IMR-90 (cell line): ENCODE measurements at regions of chr22 and their contacts with region 1.

Region 1: DNA sequence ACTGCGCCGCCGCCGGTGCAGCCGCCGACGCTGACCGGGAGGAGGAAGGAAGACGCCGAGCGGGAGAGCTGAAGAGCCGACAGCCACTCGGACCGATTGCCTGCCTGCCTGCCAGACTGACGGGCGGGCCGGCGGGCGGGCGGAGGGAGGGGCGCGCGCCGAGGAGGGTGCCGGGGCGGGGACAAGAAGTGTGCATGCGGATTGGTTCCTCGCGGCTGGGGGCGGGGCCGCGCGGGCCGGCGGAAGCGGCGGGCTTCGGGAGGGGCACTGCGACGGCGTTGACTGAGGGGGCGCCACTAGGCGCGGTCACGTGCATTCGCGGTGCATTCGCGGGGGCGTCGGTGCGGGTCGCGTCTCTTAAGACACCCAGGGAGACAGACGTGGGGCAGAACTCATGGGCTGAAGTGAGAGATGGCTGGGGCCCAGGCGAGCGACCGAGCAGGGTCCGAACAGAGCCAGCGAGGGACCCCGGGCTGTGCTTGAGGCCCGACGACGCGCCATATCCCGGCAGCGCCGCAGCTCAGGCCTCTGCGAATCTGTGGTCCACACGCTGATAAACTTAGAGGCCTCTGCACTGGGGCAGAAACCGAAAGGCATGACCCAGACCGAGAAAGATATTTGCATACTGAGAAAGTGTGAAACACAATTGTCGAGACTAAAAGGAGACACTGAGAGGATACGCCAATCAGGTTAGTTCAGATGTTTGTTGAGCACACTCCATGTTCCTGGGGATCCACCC is at the start of gene MAPK1:
- DNase-seq: peak; percentile 81
- ATAC-seq: peak; percentile 99
- H3K4me3 ChIP-seq: peak within 1 kb of the TSS; percentile 96
- H3K27ac ChIP-seq: peak within 1 kb of the TSS; percentile 88
- H3K4me1 ChIP-seq: no peaks in the 10 kb centered on the region; the same call in 1 of the 2 replicates
- H3K27me3 ChIP-seq: no peaks in the 10 kb centered on the region
- CTCF ChIP-seq: peak; percentile 31; the same call in 1 of the 2 replicates
- POLR2A ChIP-seq: peak; percentile 86
- RAD21 ChIP-seq: no peak
- total RNA-seq, gene MAPK1: 44.7 and 51.3 TPM in 2 replicates

Region 2: DNA sequence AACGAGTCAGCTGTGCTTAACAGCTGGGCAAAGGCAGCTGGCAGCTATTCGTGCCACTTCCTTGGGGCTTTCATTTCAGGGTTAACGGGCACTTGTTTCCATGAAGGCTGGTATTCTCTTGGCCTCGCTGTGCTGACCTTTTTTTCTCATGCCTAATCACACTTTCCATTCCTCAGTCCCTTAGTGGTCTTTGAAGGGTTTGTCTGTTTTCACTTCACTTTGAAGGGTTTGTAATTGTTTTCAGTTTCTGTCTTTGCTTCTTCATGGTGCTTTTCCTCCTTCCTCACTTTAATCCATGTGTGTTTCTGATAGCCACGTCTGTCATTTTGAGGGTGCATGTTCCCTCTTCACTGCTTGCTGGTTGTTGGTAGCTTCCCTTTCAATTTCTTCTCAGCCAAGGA is 177.3 kb before region 1 on chr22:
- CTCF ChIA-PET with region 1: no interaction called
- POLR2A ChIA-PET with region 1: no interaction called
- dilution Hi-C with region 1: no loop called
- in situ Hi-C with region 1: no loop called
- intact Hi-C with region 1: no loop called
- DNase-seq: no peak
- ATAC-seq: no peak
- H3K4me3 ChIP-seq: no peak overlapping the region
- H3K27ac ChIP-seq: no peak overlapping the region
- H3K4me1 ChIP-seq: no peaks in the 10 kb centered on the region
- H3K27me3 ChIP-seq: no peaks in the 10 kb centered on the region
- CTCF ChIP-seq: no peak
- POLR2A ChIP-seq: no peak
- RAD21 ChIP-seq: no peak

Region 3: GRCh38 chr22:21712894-21713712 is 154.6 kb before region 1 on chr22:
- CTCF ChIA-PET with region 1: no interaction called
- POLR2A ChIA-PET with region 1: no interaction called
- dilution Hi-C with region 1: no loop called
- in situ Hi-C with region 1: no loop called
- intact Hi-C with region 1: loop called (anchors 5 kb)
- DNase-seq: peak; percentile 78
- ATAC-seq: peak; percentile 98
- H3K4me3 ChIP-seq: no peak overlapping the region
- H3K27ac ChIP-seq: no peak overlapping the region
- H3K4me1 ChIP-seq: peaks cover 3% of the 10 kb centered on the region
- H3K27me3 ChIP-seq: no peaks in the 10 kb centered on the region
- CTCF ChIP-seq: peak; percentile 86
- POLR2A ChIP-seq: 0 out of 2 replicates have a peak, but pooled peaks have one; percentile 42
- RAD21 ChIP-seq: peak; percentile 91

Region 4: GRCh38 chr22:21760640-21761039 is 107.1 kb before region 1 on chr22:
- CTCF ChIA-PET with region 1: interaction called, 3 read pairs
- POLR2A ChIA-PET with region 1: no interaction called
- dilution Hi-C with region 1: no loop called
- in situ Hi-C with region 1: no loop called
- intact Hi-C with region 1: loop called (anchors 5 kb)
- DNase-seq: peak; percentile 98
- ATAC-seq: peak; percentile 53
- H3K4me3 ChIP-seq: no peak overlapping the region
- H3K27ac ChIP-seq: no peak overlapping the region
- H3K4me1 ChIP-seq: peaks cover 26% of the 10 kb centered on the region
- H3K27me3 ChIP-seq: no peaks in the 10 kb centered on the region
- CTCF ChIP-seq: no peak
- POLR2A ChIP-seq: no peak
- RAD21 ChIP-seq: no peak

Region 5: GRCh38 chr22:21778705-21779363 is 88.9 kb before region 1 on chr22:
- CTCF ChIA-PET with region 1: no interaction called
- POLR2A ChIA-PET with region 1: no interaction called
- dilution Hi-C with region 1: no loop called
- in situ Hi-C with region 1: no loop called
- intact Hi-C with region 1: no loop called
- DNase-seq: peak; percentile 90
- ATAC-seq: peak; percentile 95
- H3K4me3 ChIP-seq: no peak overlapping the region
- H3K27ac ChIP-seq: peak overlapping the region; percentile 26; the same call in 1 of the 2 replicates
- H3K4me1 ChIP-seq: peaks cover 6% of the 10 kb centered on the region
- H3K27me3 ChIP-seq: no peaks in the 10 kb centered on the region
- CTCF ChIP-seq: no peak
- POLR2A ChIP-seq: no peak
- RAD21 ChIP-seq: peak; percentile 30; the same call in 1 of the 2 replicates

Region 6: GRCh38 chr22:21816787-21817496 is 50.8 kb before region 1 on chr22:
- CTCF ChIA-PET with region 1: no interaction called
- POLR2A ChIA-PET with region 1: no interaction called
- dilution Hi-C with region 1: no loop called
- in situ Hi-C with region 1: no loop called
- intact Hi-C with region 1: loop called (anchors 5 kb)
- DNase-seq: peak; percentile 95
- ATAC-seq: peak; percentile 94
- H3K4me3 ChIP-seq: no peak overlapping the region
- H3K27ac ChIP-seq: no peak overlapping the region
- H3K4me1 ChIP-seq: peaks cover 10% of the 10 kb centered on the region
- H3K27me3 ChIP-seq: no peaks in the 10 kb centered on the region
- CTCF ChIP-seq: no peak
- POLR2A ChIP-seq: no peak
- RAD21 ChIP-seq: no peak

Region 7: DNA sequence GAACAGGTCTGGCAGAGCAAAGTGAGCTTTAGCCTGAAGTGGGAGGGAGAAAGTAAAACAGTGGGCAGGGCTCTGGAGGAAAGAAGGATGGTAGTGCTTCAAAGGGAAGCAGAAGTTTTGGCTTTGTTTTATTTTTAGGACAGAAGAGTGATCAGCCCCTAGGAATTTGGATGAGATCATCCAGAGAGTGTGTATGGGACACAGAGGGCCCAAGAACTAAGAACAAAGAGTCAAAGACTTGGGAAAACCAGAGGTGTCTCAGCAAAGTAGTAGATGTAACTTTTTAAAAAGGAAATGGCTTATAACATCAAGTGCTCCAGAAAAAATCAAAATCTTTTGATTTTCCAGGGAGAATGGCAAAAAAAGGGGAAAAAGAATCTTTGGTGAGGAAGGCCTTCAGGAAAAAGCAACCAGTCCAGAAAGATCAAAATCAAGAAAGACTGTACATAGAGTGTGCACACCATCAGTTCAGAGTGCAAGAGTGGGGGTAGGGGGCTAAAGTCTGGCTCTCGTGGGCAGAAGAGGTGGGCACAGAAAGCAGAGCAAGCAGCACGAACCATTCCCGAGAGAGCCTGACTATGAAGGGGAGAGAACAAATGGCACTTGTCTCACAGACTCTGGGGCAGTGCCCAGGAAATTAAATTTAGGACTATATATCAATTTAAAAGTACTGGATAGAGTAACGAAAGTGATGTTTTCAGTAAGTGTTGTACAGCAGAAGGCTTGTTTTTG is 30.3 kb before region 1 on chr22:
- CTCF ChIA-PET with region 1: no interaction called
- POLR2A ChIA-PET with region 1: no interaction called
- dilution Hi-C with region 1: no loop called
- in situ Hi-C with region 1: no loop called
- intact Hi-C with region 1: loop called (anchors 2 kb)
- DNase-seq: peak; percentile 91
- ATAC-seq: peak; percentile 95
- H3K4me3 ChIP-seq: no peak overlapping the region
- H3K27ac ChIP-seq: peak overlapping the region; percentile 95
- H3K4me1 ChIP-seq: peaks cover 10% of the 10 kb centered on the region
- H3K27me3 ChIP-seq: no peaks in the 10 kb centered on the region
- CTCF ChIP-seq: no peak
- POLR2A ChIP-seq: no peak
- RAD21 ChIP-seq: no peak

Region 8: DNA sequence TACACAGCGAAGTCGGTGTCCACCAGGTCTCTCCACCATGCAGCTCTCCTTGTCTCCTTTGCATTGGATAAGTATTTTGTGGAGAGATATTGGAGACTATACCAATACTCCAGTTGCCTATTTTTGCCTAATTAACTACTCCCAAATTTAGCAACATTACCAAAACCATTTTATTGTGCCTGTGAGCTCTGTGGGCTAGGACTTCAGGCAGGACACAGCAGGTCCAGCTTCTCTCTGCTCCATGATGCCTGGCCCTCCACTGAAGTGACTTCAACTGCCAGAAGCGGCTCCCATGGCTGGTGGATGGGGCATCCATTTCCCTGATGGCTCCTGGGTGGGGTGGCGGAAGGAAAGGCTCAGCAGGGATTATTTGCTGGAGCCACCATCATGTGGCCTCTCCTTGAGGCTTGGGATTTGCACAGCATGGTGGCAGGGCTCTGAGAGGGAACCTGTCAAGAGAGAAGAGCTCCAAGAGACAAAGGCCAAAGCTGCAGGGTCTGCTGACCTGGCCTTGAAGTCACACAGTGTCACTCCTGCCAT is 36.6 kb after region 1 on chr22:
- CTCF ChIA-PET with region 1: no interaction called
- POLR2A ChIA-PET with region 1: no interaction called
- dilution Hi-C with region 1: no loop called
- in situ Hi-C with region 1: no loop called
- intact Hi-C with region 1: no loop called
- DNase-seq: no peak
- ATAC-seq: no peak
- H3K4me3 ChIP-seq: no peak overlapping the region
- H3K27ac ChIP-seq: no peak overlapping the region
- H3K4me1 ChIP-seq: no peaks in the 10 kb centered on the region
- H3K27me3 ChIP-seq: no peaks in the 10 kb centered on the region
- CTCF ChIP-seq: no peak
- POLR2A ChIP-seq: no peak
- RAD21 ChIP-seq: no peak

Region 9: DNA sequence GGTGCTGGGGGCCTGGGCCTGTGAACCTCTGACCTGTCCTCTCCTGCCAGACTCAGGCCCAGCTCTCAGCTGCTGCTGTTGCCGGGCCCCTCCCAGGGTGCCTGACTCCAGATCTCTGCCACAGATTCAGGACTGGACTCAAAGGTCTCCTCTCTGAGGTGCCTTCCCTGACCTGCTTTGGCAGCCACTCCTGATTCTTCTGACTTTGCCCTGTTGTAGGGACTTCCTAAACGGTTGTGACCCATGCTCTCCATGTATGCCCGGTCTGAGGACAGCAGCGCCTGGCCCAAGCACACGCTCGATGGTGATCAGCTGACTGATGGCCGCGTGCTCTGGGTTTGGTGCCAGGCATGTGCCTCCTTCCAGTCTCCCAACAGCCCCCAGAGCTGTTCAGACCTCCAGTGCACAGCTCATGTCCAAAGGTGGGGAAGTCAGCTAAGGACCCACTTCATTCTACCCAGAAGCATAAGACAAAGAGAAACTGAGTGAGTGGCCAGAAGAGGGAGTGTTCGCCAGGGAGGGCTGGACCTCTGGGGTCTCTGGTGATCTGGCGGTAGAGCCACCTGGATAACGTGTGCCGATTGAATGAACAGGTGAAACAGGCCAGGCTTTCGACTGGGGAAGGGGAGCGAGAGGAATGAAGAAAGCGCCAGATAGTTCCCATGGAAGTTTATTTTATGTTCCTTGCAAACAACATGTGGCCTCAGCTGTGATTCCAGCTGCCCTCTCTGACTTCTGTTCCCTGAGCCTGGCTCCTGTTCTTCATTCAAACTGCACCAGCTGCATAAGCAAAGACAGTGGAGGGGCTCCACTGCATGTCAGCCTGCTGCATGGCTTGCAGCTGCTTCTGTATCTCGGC is 123.0 kb after region 1 on chr22:
- CTCF ChIA-PET with region 1: no interaction called
- POLR2A ChIA-PET with region 1: no interaction called
- dilution Hi-C with region 1: no loop called
- in situ Hi-C with region 1: no loop called
- intact Hi-C with region 1: no loop called
- DNase-seq: no peak
- ATAC-seq: no peak
- H3K4me3 ChIP-seq: no peak overlapping the region
- H3K27ac ChIP-seq: no peak overlapping the region
- H3K4me1 ChIP-seq: no peaks in the 10 kb centered on the region
- H3K27me3 ChIP-seq: peaks cover 61% of the 10 kb centered on the region
- CTCF ChIP-seq: no peak
- POLR2A ChIP-seq: no peak
- RAD21 ChIP-seq: no peak